Adrenal gland (tissue), 19 donors: ENCODE measurements at regions of chr1 and their contacts with region 1.

Region 1: GRCh38 chr1:222464841-222465210 is 83.1 kb downstream of the HHIPL2 start:
- DNase-seq: peak; percentile 40 to 85 (median 59)
- H3K4me3 ChIP-seq: peak overlapping the region in 2 of 4 donors; percentile 6 to 51
- H3K27ac ChIP-seq: peak overlapping the region in 3 of 5 donors; percentile 85 to 92 (median 91)
- H3K4me1 ChIP-seq: peaks cover 0 to 10% of the 10 kb centered on the region in 2 donors
- H3K27me3 ChIP-seq: no peaks in the 10 kb centered on the region
- CTCF ChIP-seq: no peak
- POLR2A ChIP-seq: no peak

Region 2: GRCh38 chr1:222634180-222635013 is 169.6 kb after region 1 on chr1:
- intact Hi-C with region 1: loop called (anchors 5 kb)
- DNase-seq: peak; percentile 56 to 89 (median 81)
- H3K4me3 ChIP-seq: no peak overlapping the region
- H3K27ac ChIP-seq: no peak overlapping the region
- H3K4me1 ChIP-seq: no peaks in the 10 kb centered on the region
- H3K27me3 ChIP-seq: no peaks in the 10 kb centered on the region
- CTCF ChIP-seq: peak; percentile 84 to 91 (median 86)
- POLR2A ChIP-seq: no peak